Activated CD4-positive, alpha-beta memory T cell treated with anti-CD3 and anti-CD28 coated beads, Interleukin-2, amount 10 ng/mL, durations not matched to agents 7 days and 5 days (primary cell): ENCODE measurements at regions of chr12 and their contacts with region 1.

Region 1: GRCh38 chr12:103956516-103957027 is 9.1 kb upstream of the TDG start:
- DNase-seq: no peak
- H3K4me3 Mint-ChIP-seq: peak overlapping the region; percentile 96
- H3K27ac Mint-ChIP-seq: peak overlapping the region; percentile 95
- H3K4me1 Mint-ChIP-seq: peaks cover 44% of the 10 kb centered on the region
- H3K27me3 Mint-ChIP-seq: no peaks in the 10 kb centered on the region

Region 2: GRCh38 chr12:103884316-103884715 is 72.3 kb before region 1 on chr12:
- CTCF ChIA-PET with region 1: no interaction called
- POLR2A ChIA-PET with region 1: no interaction called
- DNase-seq: peak; percentile 37
- H3K4me3 Mint-ChIP-seq: no peak overlapping the region
- H3K27ac Mint-ChIP-seq: no peak overlapping the region
- H3K4me1 Mint-ChIP-seq: peaks cover 17% of the 10 kb centered on the region
- H3K27me3 Mint-ChIP-seq: no peaks in the 10 kb centered on the region

Region 3: GRCh38 chr12:103915306-103915705 is 41.3 kb before region 1 on chr12:
- CTCF ChIA-PET with region 1: no interaction called
- POLR2A ChIA-PET with region 1: no interaction called
- DNase-seq: no peak
- H3K4me3 Mint-ChIP-seq: no peak overlapping the region
- H3K27ac Mint-ChIP-seq: no peak overlapping the region
- H3K4me1 Mint-ChIP-seq: no peaks in the 10 kb centered on the region
- H3K27me3 Mint-ChIP-seq: peaks cover 7% of the 10 kb centered on the region

Region 4: DNA sequence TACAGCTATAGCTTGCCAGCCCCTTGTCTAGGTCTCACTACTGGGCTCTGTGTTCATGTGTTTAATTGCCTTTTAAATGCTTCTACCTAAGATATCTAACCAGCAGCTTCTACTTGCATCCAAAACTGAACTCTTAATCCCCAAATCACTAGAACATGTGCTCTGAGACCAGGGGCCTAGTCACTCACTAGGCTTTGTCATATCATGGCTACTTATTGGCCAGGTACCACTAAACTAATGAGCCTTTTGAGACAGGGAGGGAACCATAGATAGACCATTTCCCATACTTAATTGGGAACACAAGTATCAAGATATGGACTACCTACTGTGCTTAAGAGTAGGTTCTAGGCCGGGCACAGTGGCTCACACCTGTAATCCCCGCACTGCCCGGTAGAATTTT is 19.9 kb before region 1 on chr12:
- CTCF ChIA-PET with region 1: no interaction called
- POLR2A ChIA-PET with region 1: interaction called, 12 read pairs
- DNase-seq: no peak
- H3K4me3 Mint-ChIP-seq: no peak overlapping the region
- H3K27ac Mint-ChIP-seq: no peak overlapping the region
- H3K4me1 Mint-ChIP-seq: peaks cover 57% of the 10 kb centered on the region
- H3K27me3 Mint-ChIP-seq: no peaks in the 10 kb centered on the region

Region 5: GRCh38 chr12:104026841-104027599 is 70.4 kb after region 1 on chr12:
- CTCF ChIA-PET with region 1: no interaction called
- POLR2A ChIA-PET with region 1: no interaction called
- DNase-seq: no peak
- H3K4me3 Mint-ChIP-seq: no peak overlapping the region
- H3K27ac Mint-ChIP-seq: no peak overlapping the region
- H3K4me1 Mint-ChIP-seq: no peaks in the 10 kb centered on the region
- H3K27me3 Mint-ChIP-seq: peaks cover 21% of the 10 kb centered on the region